ENCODE measurements at regions of chr1 and their contacts with region 1.

Region 1: GRCh38 chr1:10398734-10399623 is at the start of gene PGD:
- DNase-seq: peak; percentile 96 to 99
- H3K4me3 ChIP-seq: peak within 1 kb of the TSS; percentile 84 to 97
- H3K27ac ChIP-seq: peak within 1 kb of the TSS; percentile 87 to 90
- H3K4me1 ChIP-seq: peaks cover 0 to 17% of the 10 kb centered on the region in 2 donors
- H3K27me3 ChIP-seq: no peaks in the 10 kb centered on the region
- CTCF ChIP-seq: no peak
- total RNA-seq, gene PGD: 152 TPM

Region 2: DNA sequence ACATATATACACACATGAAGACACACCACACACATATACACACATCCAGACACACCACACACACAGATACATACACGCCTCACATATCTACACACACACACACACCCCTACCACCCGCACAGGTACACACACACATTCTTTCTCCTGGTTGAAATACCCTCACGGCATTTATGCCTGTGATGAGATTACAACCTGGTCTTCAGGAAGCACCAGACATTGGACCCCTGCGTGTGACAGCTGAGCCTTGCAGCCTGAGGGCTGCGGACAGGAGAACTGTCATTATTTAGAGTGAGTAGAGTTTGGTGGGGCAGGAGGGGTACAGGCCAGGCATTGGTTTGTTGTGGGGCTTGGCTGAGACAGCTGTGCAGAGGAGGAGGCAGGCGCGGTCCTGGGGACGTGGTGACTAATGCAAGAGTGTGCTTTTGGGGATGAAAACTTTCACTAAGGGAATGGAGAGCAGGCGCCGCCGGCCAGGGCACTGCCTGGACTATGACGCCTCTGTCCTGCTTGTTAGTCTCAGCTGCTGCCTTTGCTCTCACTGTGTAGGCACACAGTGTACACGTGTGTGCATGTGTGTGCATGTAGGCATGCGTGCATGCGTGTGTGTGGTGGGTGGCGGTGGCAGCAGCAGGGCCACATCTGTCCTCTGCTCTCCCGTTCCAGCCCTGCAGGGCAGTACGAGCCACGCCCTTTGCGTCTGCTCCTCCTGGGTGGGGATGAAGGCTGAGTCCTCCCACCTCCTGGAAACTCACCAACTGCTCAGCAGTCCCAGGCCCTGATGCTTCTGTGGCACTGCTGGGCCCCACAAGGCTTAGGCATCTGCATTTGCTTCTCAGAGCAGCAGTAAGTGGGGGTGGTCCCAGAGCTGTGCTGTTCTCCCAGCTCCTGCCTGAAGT is 1048.7 kb before region 1 on chr1:
- intact Hi-C with region 1: no loop called
- DNase-seq: peak in 1 of 2 donors; percentile 75
- H3K4me3 ChIP-seq: peak overlapping the region in 1 of 2 donors; percentile 34
- H3K27ac ChIP-seq: peak overlapping the region; percentile 58 to 82
- H3K4me1 ChIP-seq: peaks cover 12 to 65% of the 10 kb centered on the region in 2 donors
- H3K27me3 ChIP-seq: no peaks in the 10 kb centered on the region
- CTCF ChIP-seq: no peak

Region 3: GRCh38 chr1:10074059-10074851 is 324.7 kb before region 1 on chr1:
- intact Hi-C with region 1: no loop called
- DNase-seq: peak; percentile 46 to 77
- H3K4me3 ChIP-seq: no peak overlapping the region
- H3K27ac ChIP-seq: peak overlapping the region; percentile 42 to 63
- H3K4me1 ChIP-seq: peaks cover 0 to 19% of the 10 kb centered on the region in 2 donors
- H3K27me3 ChIP-seq: no peaks in the 10 kb centered on the region
- CTCF ChIP-seq: no peak

Region 4: GRCh38 chr1:10378081-10378841 is 20.7 kb before region 1 on chr1:
- intact Hi-C with region 1: loop called (anchors 1 kb)
- DNase-seq: peak in 1 of 2 donors; percentile 69
- H3K4me3 ChIP-seq: no peak overlapping the region
- H3K27ac ChIP-seq: peak overlapping the region; percentile 73 to 82
- H3K4me1 ChIP-seq: peaks cover 0 to 12% of the 10 kb centered on the region in 2 donors
- H3K27me3 ChIP-seq: no peaks in the 10 kb centered on the region
- CTCF ChIP-seq: no peak

Region 5: DNA sequence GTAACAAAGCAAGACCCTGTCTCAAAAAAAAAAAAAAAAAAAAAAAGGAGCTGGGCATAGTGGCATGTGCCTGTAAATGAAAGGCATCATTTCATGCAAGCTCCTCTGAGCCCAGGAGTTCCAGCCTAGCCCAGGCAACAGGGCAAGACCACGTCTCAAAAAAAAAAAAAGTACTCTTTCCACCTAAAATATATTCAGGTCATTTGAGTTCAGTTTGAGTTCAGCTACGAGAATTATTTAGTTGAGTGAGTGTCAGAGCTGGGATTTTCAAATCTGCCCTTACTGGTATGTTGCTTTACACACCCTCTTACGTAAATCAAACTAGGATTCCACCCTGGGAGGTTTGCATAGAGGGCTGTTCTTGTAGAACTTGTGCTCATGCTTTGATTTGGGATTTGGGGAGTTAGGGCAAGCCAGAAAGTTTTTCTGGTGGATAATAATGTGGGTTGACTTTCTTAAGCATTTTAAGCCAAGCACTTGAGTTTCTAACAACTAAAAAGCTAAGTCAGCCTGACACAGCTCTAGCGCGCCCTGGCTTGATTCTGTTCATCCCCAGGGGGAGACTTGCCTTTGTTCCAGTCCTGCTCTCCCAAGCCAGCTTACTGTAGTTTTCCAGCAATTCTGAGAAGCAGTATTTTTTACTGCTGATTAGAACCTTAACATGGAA is 11.4 kb before region 1 on chr1:
- intact Hi-C with region 1: loop called (anchors 1 kb)
- DNase-seq: no peak
- H3K4me3 ChIP-seq: peak overlapping the region in 1 of 2 donors; percentile 20
- H3K27ac ChIP-seq: peak overlapping the region; percentile 19 to 63
- H3K4me1 ChIP-seq: no peaks in the 10 kb centered on the region
- H3K27me3 ChIP-seq: no peaks in the 10 kb centered on the region
- CTCF ChIP-seq: peak in 1 of 3 experiments; percentile 10

Region 6: GRCh38 chr1:10472220-10473144 is 73.5 kb after region 1 on chr1 and contains the start of gene DFFA:
- intact Hi-C with region 1: loop called (anchors 2 kb)
- DNase-seq: peak; percentile 74 to 97
- H3K4me3 ChIP-seq: peak within 1 kb of the TSS; percentile 69 to 76
- H3K27ac ChIP-seq: peak within 1 kb of the TSS; percentile 33 to 62
- H3K4me1 ChIP-seq: peaks cover 11 to 22% of the 10 kb centered on the region in 2 donors
- H3K27me3 ChIP-seq: no peaks in the 10 kb centered on the region
- CTCF ChIP-seq: no peak
- total RNA-seq, gene DFFA: 11.8 TPM